ENCODE measurements at regions of chr12 and their contacts with region 1.

Region 1: GRCh38 chr12:121697098-121697698 is 15.4 kb upstream of the TMEM120B start:
- DNase-seq: peak in 7 of 9 donors; percentile 37 to 72 (median 63)
- ATAC-seq: no peak
- H3K4me3 ChIP-seq: no peak overlapping the region
- H3K4me3 Mint-ChIP-seq: no peak overlapping the region
- H3K27ac ChIP-seq: no peak overlapping the region
- H3K27ac Mint-ChIP-seq: peak overlapping the region in 4 of 9 donors; percentile 5 to 41 (median 28)
- H3K4me1 ChIP-seq: no peaks in the 10 kb centered on the region
- H3K4me1 Mint-ChIP-seq: peaks cover 0 to 5% (median 0%) of the 10 kb centered on the region in 7 donors
- H3K27me3 ChIP-seq: no peaks in the 10 kb centered on the region
- H3K27me3 Mint-ChIP-seq: peaks cover 0 to 7% (median 0%) of the 10 kb centered on the region in 5 donors

Region 2: DNA sequence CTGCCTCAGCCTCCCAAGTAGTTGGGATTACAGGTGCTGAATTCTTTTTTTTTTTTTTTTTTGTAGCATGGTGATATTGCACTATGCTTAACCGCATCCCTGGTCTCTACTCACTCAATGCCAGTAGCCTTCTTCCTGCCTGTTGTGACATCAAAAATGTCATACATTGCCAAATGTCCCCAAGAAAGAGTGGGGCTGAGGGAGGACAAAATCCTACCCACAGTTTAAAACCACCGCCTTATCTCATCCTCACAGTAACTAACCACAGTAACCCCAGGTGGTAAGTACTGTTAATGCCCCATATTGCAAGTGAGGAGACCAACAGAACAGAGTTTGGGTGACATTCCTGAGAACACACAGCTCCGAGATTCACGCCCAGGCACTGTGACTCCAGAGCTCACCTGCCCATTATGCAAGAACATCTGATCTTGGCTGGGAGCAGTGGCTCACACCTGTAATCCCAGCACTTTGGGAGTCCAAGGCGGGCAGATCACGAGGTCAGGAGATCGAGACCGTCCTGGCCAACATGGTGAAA is 47.3 kb before region 1 on chr12:
- CTCF ChIA-PET with region 1: no interaction called
- POLR2A ChIA-PET with region 1: no interaction called
- intact Hi-C with region 1: no loop called
- DNase-seq: peak in 1 of 9 donors; percentile 23
- ATAC-seq: peak; percentile 88
- H3K4me3 ChIP-seq: no peak overlapping the region
- H3K4me3 Mint-ChIP-seq: peak overlapping the region; percentile 22 to 70 (median 58)
- H3K27ac ChIP-seq: no peak overlapping the region
- H3K27ac Mint-ChIP-seq: peak overlapping the region; percentile 16 to 92 (median 80)
- H3K4me1 ChIP-seq: peaks cover 14 to 16% of the 10 kb centered on the region in 2 donors
- H3K4me1 Mint-ChIP-seq: peaks cover 14 to 41% (median 36%) of the 10 kb centered on the region in 7 donors
- H3K27me3 ChIP-seq: no peaks in the 10 kb centered on the region
- H3K27me3 Mint-ChIP-seq: no peaks in the 10 kb centered on the region

Region 3: GRCh38 chr12:121712461-121713256 is 15.5 kb after region 1 on chr12 and contains the start of gene TMEM120B:
- CTCF ChIA-PET with region 1: interaction called, 6 read pairs
- POLR2A ChIA-PET with region 1: interaction called, 3 read pairs
- intact Hi-C with region 1: loop called in 1 of 2 experiments (anchors 2 kb)
- DNase-seq: peak; percentile 75 to 91 (median 86)
- ATAC-seq: peak; percentile 97
- H3K4me3 ChIP-seq: peak within 1 kb of the TSS; percentile 99
- H3K4me3 Mint-ChIP-seq: peak within 1 kb of the TSS; percentile 84 to 97 (median 94)
- H3K27ac ChIP-seq: peak within 1 kb of the TSS; percentile 82
- H3K27ac Mint-ChIP-seq: peak within 1 kb of the TSS; percentile 86 to 96 (median 92)
- H3K4me1 ChIP-seq: peaks cover 11 to 12% of the 10 kb centered on the region in 2 donors
- H3K4me1 Mint-ChIP-seq: peaks cover 7 to 37% (median 26%) of the 10 kb centered on the region in 7 donors
- H3K27me3 ChIP-seq: no peaks in the 10 kb centered on the region
- H3K27me3 Mint-ChIP-seq: no peaks in the 10 kb centered on the region
- total RNA-seq, gene TMEM120B: 7.3 to 14.3 (median 9.2) TPM

Region 4: DNA sequence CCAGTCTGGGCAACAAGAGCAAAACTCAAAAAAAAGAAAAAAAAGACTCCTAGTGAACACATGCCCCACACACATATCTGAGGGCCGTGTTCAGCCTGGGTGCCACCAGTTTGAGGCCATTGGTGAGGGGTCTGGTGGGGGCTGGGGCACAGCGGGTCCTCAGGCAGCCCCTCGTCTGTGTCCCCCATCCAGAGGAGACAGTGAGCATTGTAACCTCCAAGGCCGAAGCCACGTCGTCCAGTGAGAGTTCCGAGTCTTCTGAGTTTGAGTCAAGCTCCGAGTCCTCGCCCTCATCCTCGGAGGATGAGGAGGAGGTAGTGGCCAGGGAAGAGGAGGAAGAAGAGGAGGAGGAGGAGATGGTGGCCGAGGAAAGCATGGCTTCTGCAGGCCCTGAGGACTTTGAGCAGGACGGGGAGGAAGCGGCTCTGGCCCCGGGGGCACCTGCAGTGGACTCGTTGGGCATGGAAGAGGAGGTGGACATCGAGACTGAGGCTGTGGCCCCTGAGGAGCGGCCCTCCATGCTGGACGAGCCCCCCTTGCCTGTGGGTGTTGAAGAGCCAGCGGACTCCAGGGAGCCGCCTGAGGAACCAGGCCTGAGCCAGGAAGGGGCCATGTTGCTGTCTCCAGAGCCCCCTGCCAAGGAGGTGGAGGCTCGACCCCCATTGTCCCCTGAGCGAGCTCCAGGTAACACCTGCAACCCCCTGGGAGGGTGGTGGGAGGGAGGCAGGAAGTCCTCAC is 122.2 kb after region 1 on chr12:
- CTCF ChIA-PET with region 1: no interaction called
- POLR2A ChIA-PET with region 1: no interaction called
- intact Hi-C with region 1: no loop called
- DNase-seq: no peak
- ATAC-seq: no peak
- H3K4me3 ChIP-seq: no peak overlapping the region
- H3K4me3 Mint-ChIP-seq: no peak overlapping the region
- H3K27ac ChIP-seq: no peak overlapping the region
- H3K27ac Mint-ChIP-seq: peak overlapping the region in 1 of 9 donors; percentile 78
- H3K4me1 ChIP-seq: no peaks in the 10 kb centered on the region
- H3K4me1 Mint-ChIP-seq: peaks cover 3 to 15% (median 11%) of the 10 kb centered on the region in 7 donors
- H3K27me3 ChIP-seq: no peaks in the 10 kb centered on the region
- H3K27me3 Mint-ChIP-seq: no peaks in the 10 kb centered on the region